CD14-positive monocyte (primary cell): ENCODE measurements at regions of chr19 and their contacts with region 1.

Region 1: DNA sequence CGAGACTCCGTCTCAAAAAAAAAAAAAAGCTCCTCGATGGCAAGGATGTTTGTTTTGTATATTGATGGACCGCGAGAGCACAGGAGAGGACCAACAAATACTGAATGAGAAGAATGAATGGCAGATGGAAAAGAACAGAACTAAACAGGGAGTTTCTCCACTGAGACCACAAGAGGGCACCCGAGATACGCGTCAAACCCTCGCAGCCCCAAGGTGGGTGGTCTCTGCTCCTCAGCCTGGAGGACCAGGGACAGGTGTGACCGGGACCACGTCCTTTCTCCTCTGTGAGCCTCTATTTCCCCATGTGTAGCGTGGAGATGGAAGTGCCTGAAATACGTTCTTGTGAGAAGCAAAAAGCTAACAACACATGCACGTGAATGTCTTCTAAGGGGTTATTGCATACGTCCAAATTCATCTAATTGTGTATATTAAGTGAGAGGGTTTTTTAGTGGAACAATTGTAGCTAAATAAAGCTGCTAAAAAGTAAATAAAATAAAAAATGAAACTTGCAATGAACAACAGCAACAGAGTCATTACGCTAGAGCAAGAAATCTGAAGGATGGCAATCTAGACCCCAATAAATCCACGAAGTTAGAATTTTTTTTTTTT is 8.3 kb upstream of the CDC42EP5 start:
- DNase-seq: peak in 2 of 3 donors; percentile 34 to 51
- H3K4me3 ChIP-seq: no peak overlapping the region
- H3K4me3 Mint-ChIP-seq: peak overlapping the region in 1 of 2 donors; percentile 82
- H3K27ac ChIP-seq: no peak overlapping the region
- H3K27ac Mint-ChIP-seq: peak overlapping the region in 5 of 7 donors; percentile 13 to 77 (median 53)
- H3K4me1 ChIP-seq: peaks cover 24 to 33% of the 10 kb centered on the region in 2 donors
- H3K4me1 Mint-ChIP-seq: peaks cover 34% of the 10 kb centered on the region
- H3K27me3 ChIP-seq: peaks cover 47 to 83% of the 10 kb centered on the region in 2 donors
- H3K27me3 Mint-ChIP-seq: peaks cover 70 to 84% (median 76%) of the 10 kb centered on the region in 3 donors
- CTCF ChIP-seq: peak; percentile 84

Region 2: GRCh38 chr19:54439174-54439853 is 42.1 kb before region 1 on chr19:
- intact Hi-C with region 1: no loop called
- DNase-seq: no peak
- H3K4me3 ChIP-seq: no peak overlapping the region
- H3K4me3 Mint-ChIP-seq: no peak overlapping the region
- H3K27ac ChIP-seq: no peak overlapping the region
- H3K27ac Mint-ChIP-seq: no peak overlapping the region
- H3K4me1 ChIP-seq: peaks cover 0 to 6% of the 10 kb centered on the region in 2 donors
- H3K4me1 Mint-ChIP-seq: peaks cover 4% of the 10 kb centered on the region
- H3K27me3 ChIP-seq: peaks cover 0 to 3% of the 10 kb centered on the region in 2 donors
- H3K27me3 Mint-ChIP-seq: peaks cover 0 to 8% (median 0%) of the 10 kb centered on the region in 3 donors
- CTCF ChIP-seq: peak; percentile 24

Region 3: GRCh38 chr19:54594737-54595136 is 113.3 kb after region 1 on chr19:
- intact Hi-C with region 1: loop called in 1 of 2 experiments (anchors 10 kb)
- DNase-seq: no peak
- H3K4me3 ChIP-seq: peak overlapping the region; percentile 82 to 93 (median 88)
- H3K4me3 Mint-ChIP-seq: peak overlapping the region; percentile 98 to 100
- H3K27ac ChIP-seq: peak overlapping the region; percentile 85 to 88
- H3K27ac Mint-ChIP-seq: peak overlapping the region in 6 of 7 donors; percentile 69 to 98 (median 96)
- H3K4me1 ChIP-seq: peaks cover 33 to 52% of the 10 kb centered on the region in 2 donors
- H3K4me1 Mint-ChIP-seq: peaks cover 66% of the 10 kb centered on the region
- H3K27me3 ChIP-seq: no peaks in the 10 kb centered on the region
- H3K27me3 Mint-ChIP-seq: peaks cover 0 to 3% (median 2%) of the 10 kb centered on the region in 3 donors
- CTCF ChIP-seq: no peak

Region 4: DNA sequence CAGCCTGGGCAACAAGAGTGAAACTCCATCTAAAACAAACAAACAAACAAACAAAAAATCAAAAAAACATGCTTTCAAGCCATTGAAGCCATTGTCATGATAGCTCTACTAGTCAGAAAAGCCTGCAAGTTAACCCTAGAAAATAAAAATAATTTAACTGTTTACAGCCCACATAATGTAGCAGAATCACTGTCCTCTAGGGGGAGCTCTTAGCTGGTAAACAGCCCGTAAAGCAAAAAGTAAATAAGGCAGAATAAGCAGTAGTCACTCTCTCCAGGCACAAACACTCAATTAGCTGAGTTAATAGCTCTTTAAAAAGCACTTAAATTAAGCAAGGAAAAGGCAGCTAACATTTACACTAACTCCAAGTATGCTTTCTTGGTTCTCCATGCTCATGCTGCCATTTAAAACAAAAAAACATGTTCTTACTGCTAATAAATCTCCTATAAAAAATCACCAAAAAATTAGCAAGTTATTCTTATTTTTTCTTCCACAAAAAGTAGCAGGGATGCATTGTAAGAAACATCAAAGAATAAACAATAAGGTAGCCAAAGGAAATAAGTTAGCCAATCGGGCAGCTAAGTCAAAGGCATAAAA is 192.7 kb after region 1 on chr19:
- intact Hi-C with region 1: loop called (anchors 10 kb)
- DNase-seq: peak; percentile 49 to 61 (median 61)
- H3K4me3 ChIP-seq: no peak overlapping the region
- H3K4me3 Mint-ChIP-seq: no peak overlapping the region
- H3K27ac ChIP-seq: no peak overlapping the region
- H3K27ac Mint-ChIP-seq: no peak overlapping the region
- H3K4me1 ChIP-seq: peaks cover 26 to 51% of the 10 kb centered on the region in 2 donors
- H3K4me1 Mint-ChIP-seq: peaks cover 47% of the 10 kb centered on the region
- H3K27me3 ChIP-seq: peaks cover 12 to 22% of the 10 kb centered on the region in 2 donors
- H3K27me3 Mint-ChIP-seq: peaks cover 19 to 22% (median 19%) of the 10 kb centered on the region in 3 donors
- CTCF ChIP-seq: peak; percentile 94